ENCODE measurements at regions of chr18 and their contacts with region 1.

Region 1: GRCh38 chr18:8654503-8655451 is 45.5 kb downstream of the RAB12 start:
- DNase-seq: no peak
- ATAC-seq: peak; percentile 62
- H3K4me3 ChIP-seq: no peak overlapping the region
- H3K27ac ChIP-seq: no peak overlapping the region
- H3K4me1 ChIP-seq: no peaks in the 10 kb centered on the region
- H3K27me3 ChIP-seq: no peaks in the 10 kb centered on the region
- CTCF ChIP-seq: peak; percentile 55 to 84 (median 78)
- POLR2A ChIP-seq: no peak

Region 2: GRCh38 chr18:8455661-8456614 is 198.8 kb before region 1 on chr18:
- in situ Hi-C with region 1: no loop called
- intact Hi-C with region 1: no loop called
- DNase-seq: no peak
- ATAC-seq: no peak
- H3K4me3 ChIP-seq: no peak overlapping the region
- H3K27ac ChIP-seq: no peak overlapping the region
- H3K4me1 ChIP-seq: no peaks in the 10 kb centered on the region
- H3K27me3 ChIP-seq: no peaks in the 10 kb centered on the region
- CTCF ChIP-seq: no peak
- POLR2A ChIP-seq: no peak

Region 3: DNA sequence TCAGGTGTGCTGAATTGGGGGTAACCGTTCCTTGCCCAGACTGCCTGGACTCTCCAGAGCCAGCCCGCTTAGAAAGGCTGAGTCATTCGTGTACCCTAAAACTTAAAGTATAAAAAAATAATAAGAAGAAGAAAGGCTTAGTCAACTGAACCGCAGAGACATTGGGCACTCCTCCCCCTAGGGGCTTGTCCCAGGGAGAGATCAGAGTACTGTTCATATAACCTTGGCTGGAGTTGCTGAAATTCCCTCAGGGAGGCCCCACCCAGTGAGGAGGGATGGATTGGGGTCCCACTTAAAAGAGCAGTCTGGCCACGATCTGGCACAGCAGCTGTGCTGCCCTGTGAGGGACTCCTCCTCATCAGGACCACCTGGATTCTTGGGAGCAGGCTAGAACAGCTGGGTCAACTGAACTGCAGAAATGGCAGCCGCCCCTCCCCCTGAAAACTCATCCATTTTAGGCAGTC is 519.0 kb after region 1 on chr18:
- in situ Hi-C with region 1: loop called in 1 of 4 experiments (anchors 25 kb)
- intact Hi-C with region 1: no loop called
- DNase-seq: no peak
- ATAC-seq: no peak
- H3K4me3 ChIP-seq: no peak overlapping the region
- H3K27ac ChIP-seq: peak overlapping the region in 3 of 4 donors; percentile 12 to 48 (median 16)
- H3K4me1 ChIP-seq: peaks cover 51 to 54% of the 10 kb centered on the region in 2 donors
- H3K27me3 ChIP-seq: no peaks in the 10 kb centered on the region
- CTCF ChIP-seq: no peak
- POLR2A ChIP-seq: no peak

Measured in gastrocnemius medialis (tissue), 4 donors.